Ascending aorta (tissue), 2 donors: ENCODE measurements at regions of chr18 and their contacts with region 1.

Region 1: DNA sequence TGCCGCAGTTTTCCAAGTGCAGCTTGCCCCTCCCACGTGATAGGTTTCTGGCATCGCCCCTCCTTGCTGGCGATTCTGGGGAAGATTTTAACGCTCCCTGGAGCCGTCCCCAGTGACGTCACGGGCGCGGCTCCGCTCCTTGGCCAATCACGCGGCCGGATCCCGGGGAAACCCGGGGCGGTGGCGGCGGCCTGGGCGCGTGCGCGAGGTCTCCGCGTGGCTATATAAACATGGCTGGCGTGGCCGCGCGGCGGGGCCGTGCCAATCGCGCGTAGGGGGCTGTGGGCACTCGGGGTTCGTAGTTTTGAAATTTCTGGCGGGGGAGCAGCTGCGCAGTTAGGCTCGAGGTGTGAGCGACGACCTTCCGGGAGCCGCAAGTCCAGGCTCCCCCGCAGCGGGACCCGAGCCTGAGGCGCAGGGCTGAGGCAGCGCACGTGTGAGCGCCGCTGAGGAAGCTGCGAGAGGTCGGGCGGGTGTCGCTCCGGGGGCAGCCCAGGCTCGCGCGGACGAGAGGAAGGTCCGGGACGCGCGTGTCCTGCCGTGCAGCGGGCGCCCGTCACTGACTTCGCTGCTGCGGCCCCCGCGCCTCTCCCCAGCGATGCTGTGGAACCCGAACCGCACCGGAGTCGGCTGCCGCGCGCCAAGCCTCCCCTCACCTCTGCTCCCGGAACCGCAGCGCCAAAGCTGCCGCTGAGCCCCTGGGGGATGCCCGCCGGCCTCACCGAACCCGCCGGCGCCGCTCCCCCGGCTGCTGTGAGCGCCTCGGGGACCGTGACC is at the start of gene TAF4B:
- DNase-seq: peak; percentile 71 to 95
- H3K4me3 ChIP-seq: peak within 1 kb of the TSS; percentile 80 to 96
- H3K27ac ChIP-seq: peak within 1 kb of the TSS; percentile 66 to 67
- H3K4me1 ChIP-seq: peaks cover 0 to 7% of the 10 kb centered on the region in 2 donors
- H3K27me3 ChIP-seq: no peaks in the 10 kb centered on the region
- CTCF ChIP-seq: no peak
- total RNA-seq, gene TAF4B: 3.0 TPM

Region 2: DNA sequence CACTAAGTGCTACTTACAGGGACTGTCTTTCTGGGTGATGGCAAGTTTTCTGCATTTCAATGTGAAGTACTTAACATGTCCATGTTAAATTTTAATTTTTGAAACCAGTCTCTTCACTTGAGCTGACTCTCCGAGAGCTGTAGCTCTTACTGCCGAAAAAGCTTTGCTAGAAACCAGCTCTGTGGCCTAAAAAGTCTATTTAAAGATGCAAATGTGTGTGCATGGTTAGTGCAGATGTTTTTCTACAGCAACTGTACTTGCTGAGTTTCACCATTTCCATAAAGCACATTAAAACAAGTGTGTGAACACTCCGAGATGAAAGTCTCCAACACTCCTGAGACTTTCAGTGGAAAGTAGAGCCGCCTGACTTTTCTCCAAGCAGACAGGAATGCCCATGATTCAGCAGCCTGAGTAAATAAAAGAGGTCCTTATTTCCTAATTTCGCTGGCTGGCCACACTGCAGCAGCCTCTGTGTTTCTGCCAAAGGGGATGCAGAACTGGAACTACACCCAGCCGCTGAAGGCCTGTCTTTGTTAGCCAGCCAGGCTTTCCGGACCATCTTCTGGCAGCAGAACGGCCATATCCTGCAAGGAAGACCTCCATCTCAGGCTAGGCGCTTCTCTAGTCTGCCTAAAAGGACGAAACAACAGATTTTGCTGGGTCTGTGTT is 995.6 kb before region 1 on chr18:
- intact Hi-C with region 1: loop called (anchors 10 kb)
- DNase-seq: peak; percentile 17 to 91
- H3K4me3 ChIP-seq: peak overlapping the region in 1 of 2 donors; percentile 43
- H3K27ac ChIP-seq: peak overlapping the region; percentile 68 to 80
- H3K4me1 ChIP-seq: peaks cover 0 to 21% of the 10 kb centered on the region in 2 donors
- H3K27me3 ChIP-seq: no peaks in the 10 kb centered on the region
- CTCF ChIP-seq: no peak

Region 3: GRCh38 chr18:26090130-26091046 is 136.0 kb before region 1 on chr18 and contains the start of gene SS18:
- intact Hi-C with region 1: loop called (anchors 1 kb)
- DNase-seq: peak; percentile 67 to 97
- H3K4me3 ChIP-seq: peak within 1 kb of the TSS; percentile 79 to 94
- H3K27ac ChIP-seq: peak within 1 kb of the TSS; percentile 97 to 99
- H3K4me1 ChIP-seq: peaks cover 0 to 13% of the 10 kb centered on the region in 2 donors
- H3K27me3 ChIP-seq: no peaks in the 10 kb centered on the region
- CTCF ChIP-seq: peak in 1 of 3 experiments; percentile 4
- total RNA-seq, gene SS18: 31.0 TPM

Region 4: GRCh38 chr18:26255695-26256622 is 29.5 kb after region 1 on chr18:
- intact Hi-C with region 1: no loop called
- DNase-seq: no peak
- H3K4me3 ChIP-seq: no peak overlapping the region
- H3K27ac ChIP-seq: no peak overlapping the region
- H3K4me1 ChIP-seq: no peaks in the 10 kb centered on the region
- H3K27me3 ChIP-seq: no peaks in the 10 kb centered on the region
- CTCF ChIP-seq: no peak

Region 5: DNA sequence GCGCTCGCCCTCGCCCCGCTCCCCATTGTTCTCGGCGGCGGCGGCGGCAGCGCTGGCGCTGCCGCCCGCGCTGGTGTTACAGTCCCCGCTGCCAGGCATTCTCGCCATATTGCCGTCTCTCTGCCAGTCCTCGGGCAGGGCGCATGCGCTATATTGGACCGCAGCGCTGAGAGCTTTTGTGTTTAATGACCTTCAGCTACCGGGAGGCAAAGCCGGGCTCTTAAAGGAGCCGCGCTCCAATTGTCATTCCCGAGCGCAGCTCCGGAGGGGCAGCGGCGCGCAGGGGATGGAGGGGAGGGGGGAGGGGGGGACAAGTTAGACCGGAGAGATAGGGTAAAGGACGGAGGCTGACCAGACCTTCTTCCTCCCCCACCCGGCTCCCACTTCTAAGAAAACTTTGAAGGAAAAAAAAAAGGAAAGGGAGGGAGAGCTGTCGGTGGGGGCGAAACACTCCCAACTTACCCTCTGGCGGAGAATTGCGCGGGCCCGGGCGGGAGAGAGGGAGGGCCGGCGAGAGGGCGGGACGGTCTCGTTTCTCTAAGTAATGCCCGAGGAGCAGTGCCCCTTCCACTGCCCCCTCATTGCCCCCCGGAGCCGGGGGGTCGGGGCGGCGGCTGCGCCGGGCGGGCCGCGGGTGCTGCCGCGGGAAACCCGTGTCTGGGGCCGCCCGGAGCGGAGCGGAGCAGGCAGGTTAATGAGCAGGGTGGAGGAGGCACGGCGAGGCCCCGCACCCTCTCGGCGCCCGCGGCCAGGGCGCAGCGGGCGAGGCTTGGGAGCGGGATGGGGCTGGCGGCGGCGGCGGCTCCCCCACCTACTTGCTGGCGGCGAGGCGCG is 322.2 kb after region 1 on chr18 and contains the start of gene KCTD1:
- intact Hi-C with region 1: loop called (anchors 1 kb)
- DNase-seq: peak; percentile 18 to 89
- H3K4me3 ChIP-seq: peak within 1 kb of the TSS; percentile 91 to 92
- H3K27ac ChIP-seq: peak within 1 kb of the TSS; percentile 84
- H3K4me1 ChIP-seq: peaks cover 3 to 17% of the 10 kb centered on the region in 2 donors
- H3K27me3 ChIP-seq: no peaks in the 10 kb centered on the region
- CTCF ChIP-seq: no peak
- total RNA-seq, gene KCTD1: 1.3 TPM